MCF 10A (cell line): ENCODE measurements at regions of chr1 and their contacts with region 1.

Region 1: GRCh38 chr1:28581536-28582247 is 10.4 kb upstream of the RAB42 start:
- DNase-seq: peak; percentile 93
- H3K4me3 Mint-ChIP-seq: peak overlapping the region; percentile 91
- H3K27ac Mint-ChIP-seq: peak overlapping the region; percentile 92
- H3K4me1 Mint-ChIP-seq: peaks cover 15% of the 10 kb centered on the region
- H3K27me3 Mint-ChIP-seq: no peaks in the 10 kb centered on the region
- CTCF ChIP-seq: no peak

Region 2: DNA sequence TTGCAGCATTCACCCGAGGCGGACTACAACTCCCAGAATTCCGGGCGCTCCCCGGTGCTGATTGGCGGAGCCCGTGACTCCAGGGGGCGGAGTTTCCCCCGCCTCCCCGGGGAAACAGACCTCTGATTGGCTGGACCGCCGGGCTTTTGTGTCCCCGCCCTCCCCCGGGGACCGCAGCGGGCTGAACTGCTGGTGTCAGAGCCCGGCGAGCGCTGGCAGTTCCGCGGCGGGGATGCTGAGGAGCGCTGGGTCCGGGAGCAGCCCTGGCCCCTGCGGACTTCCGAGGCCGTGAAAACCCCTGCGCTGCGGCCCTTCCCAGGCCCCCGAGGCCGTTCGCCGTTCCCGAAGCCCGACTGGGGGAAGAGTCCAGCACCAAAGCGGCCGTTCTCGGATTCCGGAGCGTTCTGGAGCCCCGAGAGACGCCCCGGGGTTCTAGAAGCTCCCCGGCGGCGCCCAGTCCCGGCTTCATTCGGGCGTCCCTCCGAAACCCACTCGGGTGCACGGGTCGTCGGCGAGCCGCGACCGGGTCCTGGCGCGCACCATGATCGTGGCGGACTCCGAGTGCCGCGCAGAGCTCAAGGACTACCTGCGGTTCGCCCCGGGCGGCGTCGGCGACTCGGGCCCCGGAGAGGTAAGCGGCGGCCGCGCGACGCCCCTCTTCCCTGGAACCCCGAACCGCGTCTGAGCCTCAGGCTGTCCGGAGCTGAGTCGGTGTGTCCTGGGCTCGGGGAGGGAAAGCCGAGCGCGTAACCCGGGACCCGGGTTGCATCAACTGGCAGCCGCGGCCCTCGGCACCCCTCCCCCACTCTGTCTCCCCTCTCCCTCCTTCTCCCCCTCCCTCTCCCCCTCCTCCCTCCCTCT is 322.2 kb before region 1 on chr1 and contains the start of gene SESN2:
- CTCF ChIA-PET with region 1: no interaction called
- POLR2A ChIA-PET with region 1: interaction called, 24 read pairs
- intact Hi-C with region 1: no loop called
- DNase-seq: peak; percentile 99
- H3K4me3 Mint-ChIP-seq: peak within 1 kb of the TSS; percentile 86
- H3K27ac Mint-ChIP-seq: peak within 1 kb of the TSS; percentile 98
- H3K4me1 Mint-ChIP-seq: peaks cover 22% of the 10 kb centered on the region
- H3K27me3 Mint-ChIP-seq: no peaks in the 10 kb centered on the region
- CTCF ChIP-seq: no peak
- total RNA-seq, gene SESN2: 106 and 118 TPM in 2 replicates

Region 3: DNA sequence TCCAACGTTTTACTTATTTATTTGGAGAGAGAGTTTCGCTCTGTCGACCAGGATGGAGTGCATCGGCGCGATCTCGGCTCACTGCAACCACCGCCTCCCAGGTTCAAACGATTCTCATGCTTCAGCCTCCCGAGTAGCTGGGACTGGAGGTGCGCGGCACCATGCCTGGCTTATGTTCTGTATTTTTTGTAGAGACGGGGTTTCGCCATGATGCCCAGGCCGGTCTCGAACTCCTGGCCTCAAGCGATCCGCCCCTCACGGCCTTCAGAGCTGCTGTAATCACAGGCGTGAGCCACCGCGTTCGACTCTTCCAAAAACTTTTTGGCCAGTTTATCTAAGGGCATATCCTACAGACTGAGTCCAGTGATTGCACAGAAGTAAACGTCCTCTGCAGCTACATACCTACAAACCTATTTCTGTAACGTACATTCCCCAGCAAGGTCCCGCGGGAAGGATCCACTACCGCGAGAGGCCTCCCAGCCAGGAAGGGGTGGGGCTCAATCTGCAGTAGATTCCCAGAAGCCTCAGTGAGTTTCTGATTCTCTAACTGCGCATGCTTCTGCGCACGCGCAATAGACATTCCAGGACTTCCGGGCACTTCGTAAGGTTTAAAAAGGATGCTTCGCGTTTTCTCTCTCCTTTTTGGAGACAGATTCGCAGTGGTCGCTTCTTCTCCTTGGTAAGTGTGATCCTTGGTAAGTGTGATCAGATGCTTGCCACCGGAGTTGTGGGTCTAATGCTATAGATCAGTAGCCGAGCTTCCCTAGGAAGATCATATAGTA is 76.1 kb before region 1 on chr1 and contains the start of gene RCC1:
- CTCF ChIA-PET with region 1: no interaction called
- POLR2A ChIA-PET with region 1: interaction called, 147 read pairs
- intact Hi-C with region 1: no loop called
- DNase-seq: peak; percentile 99
- H3K4me3 Mint-ChIP-seq: peak within 1 kb of the TSS; percentile 95
- H3K27ac Mint-ChIP-seq: peak within 1 kb of the TSS; percentile 98
- H3K4me1 Mint-ChIP-seq: peaks cover 22% of the 10 kb centered on the region
- H3K27me3 Mint-ChIP-seq: no peaks in the 10 kb centered on the region
- CTCF ChIP-seq: no peak
- total RNA-seq, gene RCC1: 30.3 and 42.4 TPM in 2 replicates

Region 4: DNA sequence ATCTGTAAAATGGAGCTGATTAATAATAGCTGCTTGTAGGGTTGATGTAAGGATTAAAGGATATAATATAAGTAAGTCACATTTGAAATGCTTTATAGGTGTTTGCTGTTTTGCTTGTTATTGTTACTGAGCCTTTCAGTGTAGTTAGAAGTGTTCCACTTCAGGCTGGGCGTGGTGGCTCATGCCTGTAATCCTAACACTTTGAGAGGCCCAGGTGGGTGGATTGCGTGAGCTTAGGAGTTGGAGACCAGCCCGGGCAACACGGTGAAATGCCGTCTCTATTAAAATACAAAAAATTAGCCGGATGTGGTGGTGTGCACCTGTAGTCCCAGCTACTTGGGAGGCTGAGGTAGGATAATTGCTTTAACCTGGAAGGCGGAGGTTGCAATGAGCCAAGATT is 16.7 kb before region 1 on chr1:
- CTCF ChIA-PET with region 1: interaction called, 3 read pairs
- POLR2A ChIA-PET with region 1: interaction called, 26 read pairs
- intact Hi-C with region 1: no loop called
- DNase-seq: no peak
- H3K4me3 Mint-ChIP-seq: no peak overlapping the region
- H3K27ac Mint-ChIP-seq: no peak overlapping the region
- H3K4me1 Mint-ChIP-seq: no peaks in the 10 kb centered on the region
- H3K27me3 Mint-ChIP-seq: no peaks in the 10 kb centered on the region
- CTCF ChIP-seq: no peak

Region 5: DNA sequence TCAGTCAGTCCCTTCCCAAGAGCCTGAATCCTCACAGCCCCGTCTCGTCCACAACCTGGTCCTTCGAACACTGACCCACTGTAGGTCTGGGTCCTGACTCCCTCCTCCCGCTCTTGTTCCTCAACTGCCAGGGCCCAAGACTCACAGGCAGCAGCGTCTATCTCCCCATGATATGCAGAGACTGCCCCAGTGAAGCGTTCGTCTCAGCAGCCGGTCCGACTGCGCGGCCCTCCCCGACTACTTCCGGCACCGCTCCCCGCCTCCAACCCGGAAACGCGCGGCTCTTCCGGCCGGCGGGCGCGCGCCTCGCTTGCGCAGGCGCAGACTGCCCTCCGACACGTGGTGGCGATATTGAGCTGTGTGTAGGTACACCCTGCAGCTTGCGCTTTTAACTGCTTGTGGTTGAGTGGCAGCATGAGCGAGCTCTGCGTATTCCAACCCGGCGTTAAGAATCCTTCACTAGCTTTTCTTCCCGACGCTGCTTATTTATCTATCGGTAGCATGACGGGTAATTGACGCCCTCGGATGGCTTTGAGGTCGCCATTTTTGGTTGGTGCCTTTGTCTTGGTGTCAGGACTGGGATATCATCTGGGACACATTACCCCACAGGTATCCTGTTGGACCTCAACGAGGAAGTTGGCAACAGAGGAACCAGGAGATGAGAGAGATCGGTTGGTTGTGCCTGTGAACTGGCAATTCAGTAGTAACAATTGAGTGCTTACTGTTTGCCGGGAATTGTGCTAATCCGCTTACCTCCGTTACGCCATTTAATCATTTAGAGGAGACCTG is 61.3 kb after region 1 on chr1 and contains the start of gene TAF12:
- CTCF ChIA-PET with region 1: interaction called, 4 read pairs
- POLR2A ChIA-PET with region 1: interaction called, 62 read pairs
- intact Hi-C with region 1: no loop called
- DNase-seq: peak; percentile 95
- H3K4me3 Mint-ChIP-seq: peak within 1 kb of the TSS; percentile 100
- H3K27ac Mint-ChIP-seq: peak within 1 kb of the TSS; percentile 98
- H3K4me1 Mint-ChIP-seq: peaks cover 18% of the 10 kb centered on the region
- H3K27me3 Mint-ChIP-seq: no peaks in the 10 kb centered on the region
- CTCF ChIP-seq: peak; percentile 31
- total RNA-seq, gene TAF12: 29.7 and 40.9 TPM in 2 replicates

Region 6: DNA sequence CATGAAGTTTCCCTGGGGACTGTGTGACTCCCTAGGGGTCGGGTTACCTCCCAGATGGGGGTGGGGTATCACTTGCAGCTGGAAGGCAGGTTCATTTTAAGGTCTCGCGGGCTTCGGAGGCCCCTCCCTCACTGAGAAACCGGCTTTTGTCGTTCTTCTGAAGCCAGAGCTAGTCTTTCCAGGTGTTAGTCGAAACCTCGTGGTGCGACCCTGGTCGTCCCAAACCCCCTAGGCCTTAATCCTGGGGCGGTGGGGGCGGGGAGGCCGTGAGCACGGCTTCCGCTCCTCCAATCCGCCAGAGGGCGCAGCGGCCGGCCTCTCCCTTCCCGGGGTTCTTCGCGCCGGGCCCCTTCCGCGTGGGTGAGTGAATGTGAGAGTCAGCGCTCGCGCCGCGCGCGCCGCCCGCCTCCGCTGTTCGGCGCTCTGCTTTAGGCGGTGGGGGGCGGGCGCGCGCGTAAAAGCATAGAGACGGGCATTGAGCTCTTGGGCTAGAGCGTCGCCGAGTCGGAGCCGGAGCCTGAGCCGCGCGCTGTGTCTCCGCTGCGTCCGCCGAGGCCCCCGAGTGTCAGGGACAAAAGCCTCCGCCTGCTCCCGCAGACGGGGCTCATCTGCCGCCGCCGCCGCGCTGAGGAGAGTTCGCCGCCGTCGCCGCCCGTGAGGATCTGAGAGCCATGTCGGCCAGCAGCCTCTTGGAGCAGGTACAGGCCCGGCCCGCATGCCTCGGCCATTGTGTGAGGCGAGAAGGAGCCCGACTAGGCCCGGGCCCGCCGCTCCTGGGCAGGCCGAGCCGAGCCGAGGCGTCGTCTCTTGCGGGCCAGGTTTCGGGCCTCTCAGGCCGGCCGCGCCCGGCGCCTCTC is 155.0 kb after region 1 on chr1 and contains the start of gene YTHDF2:
- CTCF ChIA-PET with region 1: no interaction called
- POLR2A ChIA-PET with region 1: interaction called, 16 read pairs
- intact Hi-C with region 1: no loop called
- DNase-seq: peak; percentile 97
- H3K4me3 Mint-ChIP-seq: peak within 1 kb of the TSS; percentile 96
- H3K27ac Mint-ChIP-seq: peak within 1 kb of the TSS; percentile 98
- H3K4me1 Mint-ChIP-seq: peaks cover 8% of the 10 kb centered on the region
- H3K27me3 Mint-ChIP-seq: no peaks in the 10 kb centered on the region
- CTCF ChIP-seq: peak; percentile 93
- total RNA-seq, gene YTHDF2: 102 and 127 TPM in 2 replicates